Activated CD4-positive, alpha-beta memory T cell treated with anti-CD3 and anti-CD28 coated beads for 36 hours (primary cell): ENCODE measurements at regions of chr2 and their contacts with region 1.

Region 1: GRCh38 chr2:203814661-203815540 is 52.7 kb upstream of the CTLA4 start:
- DNase-seq: peak; percentile 69
- H3K4me3 Mint-ChIP-seq: peak overlapping the region; percentile 60
- H3K27ac Mint-ChIP-seq: peak overlapping the region; percentile 58
- H3K4me1 Mint-ChIP-seq: peaks cover 56% of the 10 kb centered on the region
- H3K27me3 Mint-ChIP-seq: no peaks in the 10 kb centered on the region

Region 2: GRCh38 chr2:202634556-202635427 is 1180.1 kb before region 1 on chr2 and contains the start of gene FAM117B:
- CTCF ChIA-PET with region 1: no interaction called
- POLR2A ChIA-PET with region 1: no interaction called
- intact Hi-C with region 1: loop called (anchors 10 kb)
- DNase-seq: peak; percentile 99
- H3K4me3 Mint-ChIP-seq: peak within 1 kb of the TSS; percentile 95
- H3K27ac Mint-ChIP-seq: peak within 1 kb of the TSS; percentile 94
- H3K4me1 Mint-ChIP-seq: peaks cover 43% of the 10 kb centered on the region
- H3K27me3 Mint-ChIP-seq: no peaks in the 10 kb centered on the region
- total RNA-seq, gene FAM117B: 5.8 to 5.9 TPM

Region 3: GRCh38 chr2:203238704-203239526 is 576.0 kb before region 1 on chr2 and contains the start of gene CYP20A1:
- CTCF ChIA-PET with region 1: no interaction called
- POLR2A ChIA-PET with region 1: interaction called, 5 read pairs
- intact Hi-C with region 1: loop called (anchors 1 kb)
- DNase-seq: peak; percentile 98
- H3K4me3 Mint-ChIP-seq: peak within 1 kb of the TSS; percentile 86
- H3K27ac Mint-ChIP-seq: peak within 1 kb of the TSS; percentile 94
- H3K4me1 Mint-ChIP-seq: peaks cover 32% of the 10 kb centered on the region
- H3K27me3 Mint-ChIP-seq: no peaks in the 10 kb centered on the region
- total RNA-seq, gene CYP20A1: 22.1 to 24.4 TPM

Region 4: GRCh38 chr2:203535078-203535783 is 279.7 kb before region 1 on chr2 and contains the start of gene RAPH1:
- CTCF ChIA-PET with region 1: interaction called, 4 read pairs
- POLR2A ChIA-PET with region 1: interaction called, 3 read pairs
- intact Hi-C with region 1: loop called (anchors 2 kb)
- DNase-seq: peak; percentile 79
- H3K4me3 Mint-ChIP-seq: peak within 1 kb of the TSS; percentile 82
- H3K27ac Mint-ChIP-seq: peak within 1 kb of the TSS; percentile 67
- H3K4me1 Mint-ChIP-seq: peaks cover 31% of the 10 kb centered on the region
- H3K27me3 Mint-ChIP-seq: peaks cover 14% of the 10 kb centered on the region
- total RNA-seq, gene RAPH1: 11.5 to 13.1 TPM

Region 5: GRCh38 chr2:203591642-203592041 is 223.3 kb before region 1 on chr2:
- CTCF ChIA-PET with region 1: no interaction called
- POLR2A ChIA-PET with region 1: no interaction called
- intact Hi-C with region 1: no loop called
- DNase-seq: no peak
- H3K4me3 Mint-ChIP-seq: no peak overlapping the region
- H3K27ac Mint-ChIP-seq: no peak overlapping the region
- H3K4me1 Mint-ChIP-seq: peaks cover 3% of the 10 kb centered on the region
- H3K27me3 Mint-ChIP-seq: no peaks in the 10 kb centered on the region

Region 6: GRCh38 chr2:203730076-203730729 is 84.7 kb before region 1 on chr2:
- CTCF ChIA-PET with region 1: interaction called, 9 read pairs
- POLR2A ChIA-PET with region 1: interaction called, 13 read pairs
- intact Hi-C with region 1: no loop called
- DNase-seq: no peak
- H3K4me3 Mint-ChIP-seq: peak overlapping the region; percentile 47
- H3K27ac Mint-ChIP-seq: peak overlapping the region; percentile 99
- H3K4me1 Mint-ChIP-seq: peaks cover 93% of the 10 kb centered on the region
- H3K27me3 Mint-ChIP-seq: no peaks in the 10 kb centered on the region

Region 7: GRCh38 chr2:203782262-203782976 is 32.5 kb before region 1 on chr2:
- CTCF ChIA-PET with region 1: interaction called, 18 read pairs
- POLR2A ChIA-PET with region 1: interaction called, 12 read pairs
- intact Hi-C with region 1: loop called (anchors 1 kb)
- DNase-seq: peak; percentile 86
- H3K4me3 Mint-ChIP-seq: no peak overlapping the region
- H3K27ac Mint-ChIP-seq: peak overlapping the region; percentile 57
- H3K4me1 Mint-ChIP-seq: peaks cover 45% of the 10 kb centered on the region
- H3K27me3 Mint-ChIP-seq: no peaks in the 10 kb centered on the region

Region 8: GRCh38 chr2:203871371-203871983 is 56.6 kb after region 1 on chr2:
- CTCF ChIA-PET with region 1: interaction called, 20 read pairs
- POLR2A ChIA-PET with region 1: interaction called, 13 read pairs
- intact Hi-C with region 1: no loop called
- DNase-seq: peak; percentile 61
- H3K4me3 Mint-ChIP-seq: peak overlapping the region; percentile 92
- H3K27ac Mint-ChIP-seq: peak overlapping the region; percentile 98
- H3K4me1 Mint-ChIP-seq: peaks cover 74% of the 10 kb centered on the region
- H3K27me3 Mint-ChIP-seq: no peaks in the 10 kb centered on the region